Colonic mucosa (tissue), 4 donors: ENCODE measurements at regions of chr3 and their contacts with region 1.

Region 1: DNA sequence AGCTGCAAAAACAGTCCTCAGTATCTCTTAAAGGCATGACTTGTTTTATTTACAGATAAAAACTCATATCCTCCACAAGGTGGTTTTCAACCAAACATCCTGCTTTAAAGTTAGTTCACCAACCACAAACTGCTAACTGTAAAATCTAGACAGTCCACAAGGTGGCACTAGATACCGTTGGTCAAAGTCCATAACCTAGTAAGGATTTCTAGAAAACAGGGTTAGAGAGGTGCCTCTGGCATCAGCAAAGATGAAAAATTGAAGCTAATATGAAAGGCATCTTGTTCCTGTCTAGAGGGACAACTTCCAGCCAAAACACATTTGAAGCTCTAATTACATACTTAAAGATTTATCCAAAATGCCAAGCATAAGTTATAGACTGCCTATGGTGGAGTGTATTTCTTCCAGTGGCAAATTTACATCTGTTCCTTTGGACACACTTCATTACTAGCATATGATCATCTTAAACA is 56.0 kb downstream of the ZMAT3 start:
- DNase-seq: peak; percentile 71
- H3K4me3 ChIP-seq: no peak overlapping the region
- H3K27ac ChIP-seq: no peak overlapping the region
- H3K4me1 ChIP-seq: no peaks in the 10 kb centered on the region
- H3K27me3 ChIP-seq: no peaks in the 10 kb centered on the region
- CTCF ChIP-seq: peak; percentile 78

Region 2: GRCh38 chr3:179071550-179072397 is 56.2 kb after region 1 on chr3 and contains the start of gene ZMAT3:
- intact Hi-C with region 1: no loop called
- DNase-seq: peak; percentile 90
- H3K4me3 ChIP-seq: peak within 1 kb of the TSS; percentile 99
- H3K27ac ChIP-seq: peak within 1 kb of the TSS; percentile 81
- H3K4me1 ChIP-seq: peaks cover 3% of the 10 kb centered on the region
- H3K27me3 ChIP-seq: no peaks in the 10 kb centered on the region
- CTCF ChIP-seq: no peak
- total RNA-seq, gene ZMAT3: 9.6 to 12.7 TPM

Region 3: GRCh38 chr3:179147873-179148615 is 132.5 kb after region 1 on chr3 and contains the start of gene PIK3CA:
- intact Hi-C with region 1: loop called (anchors 10 kb)
- DNase-seq: peak; percentile 96
- H3K4me3 ChIP-seq: peak within 1 kb of the TSS; percentile 75
- H3K27ac ChIP-seq: peak within 1 kb of the TSS; percentile 95
- H3K4me1 ChIP-seq: no peaks in the 10 kb centered on the region
- H3K27me3 ChIP-seq: no peaks in the 10 kb centered on the region
- CTCF ChIP-seq: no peak
- total RNA-seq, gene PIK3CA: 11.3 to 18.0 TPM